Activated CD4-positive, alpha-beta T cell treated with anti-CD3 and anti-CD28 coated beads for 36 hours (primary cell): ENCODE measurements at regions of chr3 and their contacts with region 1.

Region 1: DNA sequence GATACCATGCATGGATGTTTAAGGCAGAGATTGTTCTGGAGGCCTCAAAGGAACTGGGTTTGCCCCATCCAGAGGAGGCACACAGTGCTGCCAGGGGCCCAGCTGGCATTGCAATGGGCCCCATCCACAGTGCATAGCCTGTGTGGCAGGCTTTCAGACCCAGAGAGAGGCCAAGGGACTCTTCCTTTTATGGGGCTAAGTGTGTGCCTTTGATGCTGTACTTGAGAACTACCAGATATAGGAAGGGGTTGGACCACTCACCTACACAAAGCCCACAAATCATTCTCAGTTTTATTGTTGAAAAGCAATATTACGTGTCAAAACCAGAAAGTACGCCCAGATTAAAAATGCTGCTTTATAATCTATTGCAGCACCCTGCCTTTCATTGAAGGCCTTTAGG is 134.9 kb downstream of the EPHB1 start:
- DNase-seq: no peak
- ATAC-seq: peak; percentile 82
- H3K4me3 Mint-ChIP-seq: no peak overlapping the region
- H3K27ac Mint-ChIP-seq: no peak overlapping the region
- H3K4me1 Mint-ChIP-seq: peaks cover 17% of the 10 kb centered on the region
- H3K27me3 Mint-ChIP-seq: peaks cover 7% of the 10 kb centered on the region

Region 2: GRCh38 chr3:134749802-134750553 is 180.0 kb before region 1 on chr3:
- CTCF ChIA-PET with region 1: no interaction called
- POLR2A ChIA-PET with region 1: no interaction called
- intact Hi-C with region 1: no loop called
- DNase-seq: no peak
- ATAC-seq: no peak
- H3K4me3 Mint-ChIP-seq: no peak overlapping the region
- H3K27ac Mint-ChIP-seq: no peak overlapping the region
- H3K4me1 Mint-ChIP-seq: no peaks in the 10 kb centered on the region
- H3K27me3 Mint-ChIP-seq: peaks cover 10% of the 10 kb centered on the region

Region 3: GRCh38 chr3:134802428-134803050 is 127.4 kb before region 1 on chr3:
- CTCF ChIA-PET with region 1: no interaction called
- POLR2A ChIA-PET with region 1: no interaction called
- intact Hi-C with region 1: loop called in 1 of 2 experiments (anchors 1 kb)
- DNase-seq: no peak
- ATAC-seq: peak; percentile 74
- H3K4me3 Mint-ChIP-seq: no peak overlapping the region
- H3K27ac Mint-ChIP-seq: peak overlapping the region; percentile 48
- H3K4me1 Mint-ChIP-seq: peaks cover 25% of the 10 kb centered on the region
- H3K27me3 Mint-ChIP-seq: peaks cover 22% of the 10 kb centered on the region